Esophagus squamous epithelium (tissue), 5 donors: ENCODE measurements at regions of chr1 and their contacts with region 1.

Region 1: DNA sequence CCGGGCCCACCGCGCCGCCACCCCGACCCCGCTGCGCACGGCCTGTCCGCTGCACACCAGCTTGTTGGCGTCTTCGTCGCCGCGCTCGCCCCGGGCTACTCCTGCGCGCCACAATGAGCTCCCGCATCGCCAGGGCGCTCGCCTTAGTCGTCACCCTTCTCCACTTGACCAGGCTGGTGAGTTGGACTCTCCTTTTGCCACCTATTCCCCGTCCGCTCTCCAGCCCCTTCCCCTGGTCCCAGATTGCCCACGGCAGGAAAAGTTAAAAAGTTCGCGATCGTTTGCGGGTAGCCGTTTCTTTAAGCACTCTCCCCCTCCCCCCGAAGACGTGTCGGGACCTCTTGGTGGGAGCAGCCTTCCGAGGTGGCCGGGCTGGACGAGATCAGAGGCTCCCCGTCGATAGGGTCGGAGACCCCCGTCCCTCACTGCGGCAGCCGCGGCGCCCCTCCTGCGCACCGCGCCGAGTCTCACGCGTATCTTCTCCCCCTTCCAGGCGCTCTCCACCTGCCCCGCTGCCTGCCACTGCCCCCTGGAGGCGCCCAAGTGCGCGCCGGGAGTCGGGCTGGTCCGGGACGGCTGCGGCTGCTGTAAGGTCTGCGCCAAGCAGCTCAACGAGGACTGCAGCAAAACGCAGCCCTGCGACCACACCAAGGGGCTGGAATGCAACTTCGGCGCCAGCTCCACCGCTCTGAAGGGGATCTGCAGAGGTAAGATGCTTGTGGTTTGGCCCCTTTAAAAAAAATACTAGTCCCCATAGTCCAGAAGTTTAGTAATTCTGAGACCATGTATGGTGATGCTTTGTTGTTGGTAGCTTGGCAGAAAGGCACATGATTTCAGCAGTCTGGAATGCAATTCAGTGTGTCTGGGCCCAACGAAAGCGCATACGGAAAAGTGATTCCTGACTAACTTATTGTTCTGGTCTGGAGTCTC is 576 bp downstream of the CCN1 start:
- DNase-seq: no peak
- H3K4me3 ChIP-seq: peak overlapping the region; percentile 73 to 83 (median 80)
- H3K27ac ChIP-seq: peak overlapping the region; percentile 89 to 99 (median 94)
- H3K4me1 ChIP-seq: peaks cover 5 to 84% (median 14%) of the 10 kb centered on the region in 3 donors
- H3K27me3 ChIP-seq: peaks cover 0 to 49% (median 0%) of the 10 kb centered on the region in 4 donors
- CTCF ChIP-seq: peak; percentile 43 to 90 (median 80)
- POLR2A ChIP-seq: no peak

Region 2: DNA sequence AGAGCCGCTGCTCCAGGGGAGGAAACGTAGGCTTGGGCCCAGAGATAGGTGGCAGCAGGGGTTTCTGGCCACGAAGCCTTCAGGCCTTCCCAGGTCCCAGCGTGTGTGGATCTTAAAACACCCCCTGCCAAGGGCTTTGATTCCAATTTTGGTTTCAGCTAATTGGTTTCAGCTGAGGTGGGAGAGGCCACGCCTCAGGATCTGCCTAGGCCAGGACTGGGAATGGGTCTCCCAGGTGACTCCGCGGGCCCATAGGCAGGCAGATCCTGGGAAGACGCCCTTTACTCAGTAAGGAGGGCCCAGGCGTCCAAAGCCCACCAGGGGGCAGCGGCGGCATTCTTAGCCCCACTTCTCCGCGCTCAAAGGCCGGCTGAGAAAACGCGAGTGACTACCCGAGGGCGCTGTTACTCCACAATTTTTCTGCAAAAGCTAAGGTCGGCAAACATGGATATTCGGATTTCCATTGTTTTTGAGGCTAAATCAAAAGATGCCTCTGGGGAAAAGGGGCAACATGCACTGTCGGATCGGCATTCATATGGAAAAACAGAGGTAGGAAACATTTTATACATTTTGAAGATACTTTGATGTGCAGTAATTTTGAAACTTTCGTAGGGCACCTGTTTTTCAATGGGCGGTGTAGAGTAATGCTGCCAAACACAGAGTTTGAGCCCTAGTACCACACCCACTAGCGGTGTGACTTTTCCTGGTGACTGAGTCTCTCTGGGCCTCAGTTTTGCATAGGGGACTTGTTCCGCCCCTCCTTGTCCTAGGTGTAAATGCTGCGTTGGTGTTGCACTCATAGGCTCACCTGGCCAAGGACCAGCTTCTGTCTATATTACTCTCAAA is 272.9 kb before region 1 on chr1:
- intact Hi-C with region 1: loop called (anchors 5 kb)
- DNase-seq: no peak
- H3K4me3 ChIP-seq: peak overlapping the region in 2 of 4 donors; percentile 4 to 27
- H3K27ac ChIP-seq: no peak overlapping the region
- H3K4me1 ChIP-seq: peaks cover 0 to 12% (median 9%) of the 10 kb centered on the region in 3 donors
- H3K27me3 ChIP-seq: no peaks in the 10 kb centered on the region
- CTCF ChIP-seq: peak; percentile 83 to 96 (median 93)
- POLR2A ChIP-seq: no peak

Region 3: DNA sequence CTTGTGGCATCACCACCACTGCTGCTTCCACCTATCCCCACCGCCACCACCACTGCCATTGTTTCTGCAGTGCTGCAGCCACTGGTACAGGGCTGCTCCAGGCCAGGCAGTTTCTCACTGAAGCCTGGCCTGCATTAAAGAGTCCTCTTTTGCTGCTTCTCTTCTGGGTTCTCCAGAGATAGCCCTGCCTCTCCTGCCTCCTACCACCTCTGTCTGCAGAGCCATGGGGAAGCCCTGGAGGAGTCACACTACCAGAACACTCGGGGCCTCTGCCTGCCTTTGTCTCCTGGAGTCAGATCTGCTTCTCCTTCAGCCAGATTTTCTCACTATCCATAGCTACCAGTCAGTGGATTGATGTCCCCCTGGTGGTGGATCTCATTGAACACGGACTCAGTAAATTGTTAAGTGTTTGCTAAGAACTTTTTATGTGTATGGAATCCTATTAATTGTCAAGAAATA is 78.5 kb before region 1 on chr1:
- intact Hi-C with region 1: loop called (anchors 10 kb)
- DNase-seq: no peak
- H3K4me3 ChIP-seq: no peak overlapping the region
- H3K27ac ChIP-seq: no peak overlapping the region
- H3K4me1 ChIP-seq: peaks cover 0 to 7% (median 0%) of the 10 kb centered on the region in 3 donors
- H3K27me3 ChIP-seq: no peaks in the 10 kb centered on the region
- CTCF ChIP-seq: peak in 5 of 6 experiments; percentile 34 to 67 (median 58)
- POLR2A ChIP-seq: no peak

Region 4: GRCh38 chr1:85707990-85708828 is 127.1 kb after region 1 on chr1 and contains the start of gene ZNHIT6:
- intact Hi-C with region 1: loop called (anchors 10 kb)
- DNase-seq: peak; percentile 50
- H3K4me3 ChIP-seq: peak within 1 kb of the TSS; percentile 58 to 94 (median 81)
- H3K27ac ChIP-seq: peak within 1 kb of the TSS; percentile 78 to 91 (median 90)
- H3K4me1 ChIP-seq: peaks cover 13 to 39% (median 13%) of the 10 kb centered on the region in 3 donors
- H3K27me3 ChIP-seq: peaks cover 0 to 3% (median 0%) of the 10 kb centered on the region in 4 donors
- CTCF ChIP-seq: peak in 5 of 6 experiments; percentile 7 to 62 (median 38)
- POLR2A ChIP-seq: peak in 2 of 4 donors; percentile 20 to 45
- total RNA-seq, gene ZNHIT6: 8.2 to 20.0 (median 9.9) TPM